ENCODE measurements at regions of chr12 and their contacts with region 1.

Region 1: DNA sequence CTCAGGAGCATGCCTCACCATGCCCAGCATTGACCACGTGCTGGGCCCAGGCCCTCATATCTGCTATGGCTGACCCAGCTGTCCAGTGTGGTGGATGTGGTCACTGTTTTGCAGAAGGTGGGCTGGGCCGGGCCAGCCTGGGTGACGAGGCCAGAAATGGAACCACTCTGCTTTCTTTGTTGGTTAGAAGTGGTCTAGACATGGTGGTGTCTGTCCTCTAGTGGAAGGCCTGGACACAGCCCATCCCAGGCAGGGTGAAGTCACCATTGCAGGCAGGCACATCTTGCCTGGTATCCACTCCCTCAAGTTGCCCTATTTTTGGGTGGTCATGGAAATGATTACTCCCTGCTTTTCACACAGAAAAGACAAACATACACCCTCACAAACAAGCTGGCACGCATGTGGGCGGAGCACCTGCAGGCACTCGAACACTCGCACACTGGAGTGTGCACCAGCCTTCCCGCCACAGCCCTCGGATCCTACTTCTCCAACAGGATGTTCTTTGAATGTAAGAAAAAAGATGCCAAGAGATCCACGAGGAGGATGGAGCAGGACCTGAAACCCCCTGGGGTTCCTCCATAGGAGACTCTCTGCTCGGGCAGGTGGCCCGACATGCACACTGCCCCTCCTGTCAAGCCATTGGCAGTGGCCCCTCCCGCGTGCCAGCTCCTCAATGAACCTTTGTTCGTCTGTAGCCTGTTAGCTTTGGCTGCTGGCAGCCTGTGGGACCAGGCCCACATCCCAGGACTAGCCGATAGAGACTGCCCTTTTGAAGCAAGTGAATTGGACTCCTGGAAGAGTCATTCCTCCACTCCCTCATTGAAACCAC is 38.4 kb downstream of the MLXIP start:
- DNase-seq: no peak
- ATAC-seq: no peak
- H3K4me3 ChIP-seq: no peak overlapping the region
- H3K27ac ChIP-seq: no peak overlapping the region
- H3K4me1 ChIP-seq: no peaks in the 10 kb centered on the region; the same call in 1 of the 2 replicates
- H3K27me3 ChIP-seq: no peaks in the 10 kb centered on the region
- CTCF ChIP-seq: no peak; the same call in 1 of the 2 replicates
- POLR2A ChIP-seq: no peak
- RAD21 ChIP-seq: no peak

Region 2: GRCh38 chr12:121364683-121365121 is 752.2 kb before region 1 on chr12:
- CTCF ChIA-PET with region 1: no interaction called
- POLR2A ChIA-PET with region 1: interaction called, 18 read pairs
- dilution Hi-C with region 1: no loop called
- in situ Hi-C with region 1: no loop called
- intact Hi-C with region 1: no loop called
- DNase-seq: peak; percentile 8
- ATAC-seq: no peak
- H3K4me3 ChIP-seq: no peak overlapping the region
- H3K27ac ChIP-seq: no peak overlapping the region
- H3K4me1 ChIP-seq: no peaks in the 10 kb centered on the region
- H3K27me3 ChIP-seq: 0 out of 2 replicates have a peak, but pooled peaks cover 1% of the 10 kb centered on the region
- CTCF ChIP-seq: no peak
- POLR2A ChIP-seq: no peak
- RAD21 ChIP-seq: no peak

Region 3: DNA sequence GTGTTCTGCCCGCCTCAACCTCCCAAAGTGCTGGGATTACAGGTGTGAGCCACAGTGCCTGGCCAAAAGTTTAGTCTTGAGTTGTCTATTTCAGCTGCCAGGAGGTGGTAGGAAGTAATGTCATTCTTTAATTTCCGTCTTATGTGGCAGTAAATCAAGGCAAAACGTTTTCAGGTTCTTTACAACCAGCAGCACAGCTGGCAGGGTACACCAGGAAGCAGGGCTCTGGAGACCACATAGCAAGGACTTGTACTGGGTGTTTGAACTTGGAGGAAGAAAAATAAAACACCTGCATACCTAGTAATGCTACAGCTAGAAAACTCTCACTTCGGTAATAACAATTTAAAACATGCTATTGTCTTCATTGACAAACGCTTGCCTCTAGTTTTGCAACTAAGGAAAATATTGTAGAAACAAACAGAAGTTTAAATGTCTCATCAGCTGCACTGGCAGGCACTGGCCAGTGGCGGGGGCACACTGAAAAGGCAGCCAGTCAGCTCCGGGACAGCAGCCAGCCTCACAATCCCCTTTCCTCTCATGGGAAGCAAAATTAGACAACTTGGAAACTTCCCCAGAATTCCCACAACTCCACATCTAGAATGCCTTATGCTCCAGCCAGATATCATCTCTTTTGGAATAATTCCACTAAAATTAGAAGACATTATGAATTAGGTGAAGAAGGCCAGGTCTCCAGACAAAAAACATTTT is 233.4 kb after region 1 on chr12:
- CTCF ChIA-PET with region 1: no interaction called
- POLR2A ChIA-PET with region 1: no interaction called
- dilution Hi-C with region 1: no loop called
- in situ Hi-C with region 1: no loop called
- intact Hi-C with region 1: no loop called
- DNase-seq: peak; percentile 75
- ATAC-seq: peak; percentile 98
- H3K4me3 ChIP-seq: no peak overlapping the region
- H3K27ac ChIP-seq: no peak overlapping the region
- H3K4me1 ChIP-seq: no peaks in the 10 kb centered on the region
- H3K27me3 ChIP-seq: no peaks in the 10 kb centered on the region
- CTCF ChIP-seq: peak; percentile 41
- POLR2A ChIP-seq: no peak
- RAD21 ChIP-seq: no peak